HepG2 (cell line): ENCODE measurements at regions of chr2 and their contacts with region 1.

Region 1: GRCh38 chr2:25606892-25607291 is 66.5 kb downstream of the DTNB start:
- DNase-seq: peak; percentile 46
- ATAC-seq: 0 out of 3 replicates have a peak, but pooled peaks have one; percentile 38
- H3K4me3 ChIP-seq: no peak overlapping the region
- H3K27ac ChIP-seq: no peak overlapping the region
- H3K4me1 ChIP-seq: peaks cover 15% of the 10 kb centered on the region
- H3K27me3 ChIP-seq: no peaks in the 10 kb centered on the region
- CTCF ChIP-seq: peak; percentile 74
- EP300 ChIP-seq: no peak
- POLR2A ChIP-seq: no peak
- RAD21 ChIP-seq: peak; percentile 73

Region 2: GRCh38 chr2:25558262-25558661 is 48.6 kb before region 1 on chr2:
- CTCF ChIA-PET with region 1: no interaction called
- POLR2A ChIA-PET with region 1: no interaction called
- in situ Hi-C with region 1: no loop called
- intact Hi-C with region 1: no loop called
- DNase-seq: no peak
- ATAC-seq: no peak
- H3K4me3 ChIP-seq: no peak overlapping the region
- H3K27ac ChIP-seq: no peak overlapping the region
- H3K4me1 ChIP-seq: peaks cover 8% of the 10 kb centered on the region
- H3K27me3 ChIP-seq: no peaks in the 10 kb centered on the region
- CTCF ChIP-seq: no peak
- EP300 ChIP-seq: no peak
- POLR2A ChIP-seq: no peak
- RAD21 ChIP-seq: no peak

Region 3: DNA sequence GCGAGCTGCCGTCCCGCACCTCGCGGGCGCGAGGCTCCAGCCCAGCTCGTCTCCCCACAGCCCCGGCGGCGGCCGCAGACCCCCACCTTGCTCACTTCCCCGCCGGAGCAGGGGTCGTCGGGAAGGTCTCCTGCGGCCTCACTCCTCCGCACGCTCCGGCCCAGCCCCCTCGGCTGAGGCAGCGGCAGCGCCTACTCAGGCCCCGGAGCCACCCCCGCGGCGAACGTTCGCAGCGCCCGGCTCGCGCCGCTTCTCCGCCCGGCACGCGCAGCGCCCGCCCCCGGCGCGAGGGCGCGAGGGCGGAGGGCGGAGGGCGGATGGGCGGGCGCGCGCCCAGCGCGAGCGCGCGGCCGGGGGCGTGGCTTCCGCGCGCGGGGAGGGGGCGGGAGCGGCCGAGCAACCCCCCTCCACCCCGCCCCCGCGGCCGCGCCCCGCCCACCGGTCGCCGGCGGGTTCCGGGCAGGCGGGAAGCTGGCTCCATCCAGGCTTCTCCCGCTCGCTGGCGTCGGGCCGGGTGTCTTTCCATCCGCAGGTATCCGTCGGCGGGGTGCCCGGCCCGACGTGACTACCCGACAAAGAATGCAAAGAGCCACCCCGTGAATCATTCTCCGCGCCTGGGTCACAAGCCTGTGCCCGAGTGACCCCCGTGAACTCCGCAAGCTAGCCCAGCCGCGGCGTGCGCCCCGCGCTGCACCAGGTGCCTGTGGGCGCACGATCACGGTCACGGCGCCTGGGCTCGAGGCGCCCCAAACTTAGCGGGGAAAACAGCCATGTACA is 66.6 kb after region 1 on chr2 and contains the start of gene DTNB:
- CTCF ChIA-PET with region 1: no interaction called
- POLR2A ChIA-PET with region 1: no interaction called
- in situ Hi-C with region 1: no loop called
- intact Hi-C with region 1: no loop called
- DNase-seq: peak; percentile 31
- ATAC-seq: peak; percentile 79
- H3K4me3 ChIP-seq: peak within 1 kb of the TSS; percentile 74 to 92 (median 89)
- H3K27ac ChIP-seq: peak within 1 kb of the TSS; percentile 58
- H3K4me1 ChIP-seq: peaks cover 19% of the 10 kb centered on the region
- H3K27me3 ChIP-seq: 0 out of 5 replicates have a peak, but pooled peaks cover 0 to 4% of the 10 kb centered on the region in 2 experiments
- CTCF ChIP-seq: 0 out of 2 replicates have a peak, but pooled peaks have one; percentile 2
- EP300 ChIP-seq: no peak
- POLR2A ChIP-seq: peak; percentile 58 to 69; a peak in 3 of 4 replicates
- RAD21 ChIP-seq: peak; percentile 65
- total RNA-seq, gene DTNB: 13.7 and 14.4 TPM in 2 replicates

Region 4: DNA sequence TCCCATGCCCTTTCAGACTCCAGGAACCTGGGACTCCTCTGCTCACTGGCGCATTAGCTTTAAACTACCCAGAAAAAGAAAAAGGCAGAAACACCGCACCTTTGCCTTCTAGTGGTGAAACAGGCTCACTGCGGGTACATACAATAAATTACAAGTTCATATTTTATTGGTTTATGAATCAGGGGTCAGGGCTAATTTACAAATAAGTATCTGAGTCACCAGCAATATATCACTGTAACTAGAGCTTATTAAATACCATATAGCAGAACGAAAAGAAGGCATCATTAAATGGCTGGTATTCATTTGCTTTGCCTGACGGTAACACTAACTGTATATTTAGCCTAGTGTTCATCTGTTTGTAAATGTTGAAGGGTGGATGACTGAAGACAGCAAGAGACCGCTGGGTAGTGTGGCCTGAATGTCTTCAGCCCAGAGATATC is 93.3 kb after region 1 on chr2:
- CTCF ChIA-PET with region 1: interaction called, 18 read pairs
- POLR2A ChIA-PET with region 1: interaction called, 3 read pairs
- in situ Hi-C with region 1: no loop called
- intact Hi-C with region 1: loop called (anchors 1 kb)
- DNase-seq: peak; percentile 41
- ATAC-seq: peak; percentile 36
- H3K4me3 ChIP-seq: no peak overlapping the region
- H3K27ac ChIP-seq: no peak overlapping the region
- H3K4me1 ChIP-seq: peaks cover 22% of the 10 kb centered on the region
- H3K27me3 ChIP-seq: peaks cover 3 to 34% of the 10 kb centered on the region in 2 experiments; a peak in 3 of 5 replicates
- CTCF ChIP-seq: peak; percentile 72
- EP300 ChIP-seq: no peak
- POLR2A ChIP-seq: no peak
- RAD21 ChIP-seq: peak; percentile 30